ENCODE measurements at regions of chr9 and their contacts with region 1.

Region 1: GRCh38 chr9:129333953-129334724 is 156.1 kb upstream of the IER5L start:
- DNase-seq: peak; percentile 87 to 94
- H3K4me3 ChIP-seq: peak overlapping the region in 3 of 4 experiments; percentile 23 to 49 (median 40); a peak in 6 of 8 replicates
- H3K27ac ChIP-seq: peak overlapping the region; percentile 92
- H3K4me1 ChIP-seq: peaks cover 8 to 40% (median 34%) of the 10 kb centered on the region in 4 experiments
- H3K27me3 ChIP-seq: 0 out of 7 replicates have a peak, but pooled peaks cover 0 to 2% (median 0%) of the 10 kb centered on the region in 4 experiments
- CTCF ChIP-seq: peak in 1 of 3 experiments; percentile 7; a peak in 1 of 4 replicates
- EP300 ChIP-seq: peak in 1 of 2 experiments; percentile 92; a peak in 1 of 3 replicates
- POLR2A ChIP-seq: peak in 1 of 2 experiments; percentile 43; a peak in 1 of 3 replicates
- RAD21 ChIP-seq: peak in 1 of 2 experiments; percentile 35; a peak in 2 of 4 replicates

Region 2: DNA sequence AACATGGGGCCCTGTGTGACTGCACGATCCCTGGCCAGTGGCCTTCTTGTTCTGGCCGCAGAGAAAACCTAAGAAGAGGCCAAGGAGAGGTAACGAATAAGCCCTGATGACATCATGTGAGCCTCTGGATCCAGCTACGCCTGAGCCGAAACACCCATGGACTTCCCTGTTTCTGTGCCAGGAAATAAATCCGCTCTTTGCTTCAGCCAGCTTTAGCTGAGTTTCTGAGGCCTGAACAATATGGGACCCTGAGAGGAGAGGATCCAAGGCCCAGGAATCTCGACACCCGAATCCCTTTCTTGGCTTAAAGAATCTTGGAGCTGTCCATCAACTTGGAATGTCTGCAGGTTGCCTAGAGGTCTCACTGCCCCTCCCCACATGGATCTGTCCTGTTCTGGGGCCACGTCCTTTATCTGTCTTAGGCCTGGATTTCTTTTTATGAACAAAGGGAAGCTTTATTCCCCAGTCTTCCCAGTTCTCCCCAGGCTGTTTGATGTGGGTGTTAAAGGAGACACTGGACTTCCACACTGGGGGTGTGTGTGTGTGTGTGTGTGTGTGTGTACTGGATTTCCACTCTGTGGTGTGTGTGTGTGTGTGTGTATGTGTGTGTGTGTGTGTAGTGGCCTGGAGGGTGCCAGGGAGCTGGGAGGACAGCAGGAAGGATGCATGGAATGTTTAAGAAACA is 169.8 kb before region 1 on chr9:
- CTCF ChIA-PET with region 1: no interaction called
- POLR2A ChIA-PET with region 1: no interaction called
- DNase-seq: no peak
- H3K4me3 ChIP-seq: no peak overlapping the region
- H3K27ac ChIP-seq: no peak overlapping the region
- H3K4me1 ChIP-seq: peaks cover 8 to 20% (median 15%) of the 10 kb centered on the region in 4 experiments
- H3K27me3 ChIP-seq: no peaks in the 10 kb centered on the region
- CTCF ChIP-seq: no peak
- EP300 ChIP-seq: no peak
- POLR2A ChIP-seq: no peak
- RAD21 ChIP-seq: no peak

Region 3: DNA sequence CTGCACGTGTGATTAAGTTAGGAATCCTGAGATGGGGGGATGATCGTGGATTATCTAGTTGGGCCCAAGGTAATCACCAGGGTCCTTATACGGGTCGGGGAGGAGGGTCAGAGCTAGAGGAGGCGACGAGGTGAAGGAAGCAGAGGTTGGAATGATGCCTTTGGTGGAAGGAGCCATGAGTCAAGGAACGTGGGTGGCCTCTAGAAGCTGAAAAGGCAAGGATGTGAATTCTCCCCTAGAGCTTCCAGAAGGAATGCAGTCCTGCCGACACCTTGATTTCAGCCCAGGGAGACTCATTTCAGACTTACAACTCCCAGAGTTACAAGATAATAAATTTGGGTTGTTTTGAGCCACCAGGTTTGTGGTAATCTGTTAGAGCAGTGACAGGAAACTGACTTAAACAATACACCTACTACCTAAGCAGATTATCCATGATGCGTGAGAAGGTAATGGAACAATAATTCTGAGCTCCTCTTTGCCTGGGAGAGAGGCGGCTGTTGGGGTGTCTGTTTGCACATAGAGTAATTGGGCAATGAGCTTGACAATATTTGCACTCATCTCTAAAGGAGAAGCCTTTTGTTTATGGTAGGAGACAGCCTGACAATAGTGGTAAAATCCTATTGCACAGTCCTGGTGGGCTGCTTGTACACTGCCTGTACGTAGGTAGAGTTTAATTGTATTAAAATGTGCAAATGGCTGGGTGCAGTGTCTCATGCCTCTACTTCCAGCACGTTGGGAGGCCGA is 26.7 kb before region 1 on chr9:
- CTCF ChIA-PET with region 1: interaction called, 10 read pairs
- POLR2A ChIA-PET with region 1: no interaction called
- DNase-seq: no peak
- H3K4me3 ChIP-seq: no peak overlapping the region
- H3K27ac ChIP-seq: no peak overlapping the region
- H3K4me1 ChIP-seq: peaks cover 0 to 3% (median 0%) of the 10 kb centered on the region in 4 experiments; a peak in 2 of 7 replicates
- H3K27me3 ChIP-seq: no peaks in the 10 kb centered on the region; a peak in 1 of 7 replicates
- CTCF ChIP-seq: no peak
- EP300 ChIP-seq: no peak
- POLR2A ChIP-seq: no peak
- RAD21 ChIP-seq: no peak

Region 4: GRCh38 chr9:129320575-129321263 is 13.4 kb before region 1 on chr9:
- CTCF ChIA-PET with region 1: interaction called, 8 read pairs
- POLR2A ChIA-PET with region 1: interaction called, 23 read pairs
- DNase-seq: peak in 1 of 2 experiments; percentile 77
- H3K4me3 ChIP-seq: peak overlapping the region; percentile 8 to 54 (median 23); a peak in 5 of 8 replicates
- H3K27ac ChIP-seq: no peak overlapping the region
- H3K4me1 ChIP-seq: peaks cover 0 to 19% (median 12%) of the 10 kb centered on the region in 4 experiments; a peak in 6 of 7 replicates
- H3K27me3 ChIP-seq: peaks cover 0 to 7% (median 5%) of the 10 kb centered on the region in 4 experiments; a peak in 4 of 7 replicates
- CTCF ChIP-seq: no peak
- EP300 ChIP-seq: no peak
- POLR2A ChIP-seq: no peak
- RAD21 ChIP-seq: peak in 1 of 2 experiments; percentile 23; a peak in 2 of 4 replicates

Region 5: DNA sequence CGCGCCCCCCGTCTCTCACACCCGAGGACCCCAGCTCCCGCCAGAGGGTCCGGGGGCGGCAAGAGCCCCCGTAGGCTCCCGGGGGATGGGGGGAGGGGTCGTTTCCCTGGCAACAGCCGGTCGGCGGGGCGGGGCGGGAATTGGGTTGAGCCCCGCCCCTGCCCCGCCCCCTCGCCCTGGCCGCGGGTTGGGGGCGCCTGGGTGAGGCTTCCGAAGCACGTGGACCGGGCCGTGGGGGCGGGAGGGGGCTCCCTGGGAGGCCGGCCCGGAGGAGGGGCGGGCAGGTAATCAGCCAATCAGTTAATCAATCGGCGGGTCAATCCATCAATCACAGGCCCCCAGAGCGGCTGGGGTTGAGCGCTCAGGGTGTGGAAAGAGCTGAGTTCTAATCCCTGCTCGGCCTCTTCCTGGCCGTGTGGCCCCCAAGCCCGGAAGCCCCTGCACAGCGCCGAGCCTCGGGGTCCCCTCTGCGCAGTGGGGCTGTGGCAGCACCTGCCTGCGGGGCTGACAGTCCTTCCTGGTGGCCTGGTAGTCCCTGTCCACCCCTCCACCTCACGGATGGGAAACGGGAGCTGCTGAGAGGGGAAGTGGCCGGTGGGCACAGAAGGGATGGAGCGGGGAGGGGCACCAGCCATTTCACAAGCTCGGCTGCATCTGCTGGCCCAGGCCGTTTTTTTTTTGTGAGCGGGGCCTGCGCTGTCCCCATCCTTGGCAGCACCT is 18.2 kb after region 1 on chr9:
- CTCF ChIA-PET with region 1: interaction called, 4 read pairs
- POLR2A ChIA-PET with region 1: interaction called, 65 read pairs
- DNase-seq: peak; percentile 61 to 93
- H3K4me3 ChIP-seq: peak overlapping the region; percentile 47 to 82 (median 56)
- H3K27ac ChIP-seq: peak overlapping the region; percentile 21; the same call in 1 of the 2 replicates
- H3K4me1 ChIP-seq: peaks cover 0 to 19% (median 8%) of the 10 kb centered on the region in 4 experiments; a peak in 4 of 7 replicates
- H3K27me3 ChIP-seq: no peaks in the 10 kb centered on the region; a peak in 1 of 7 replicates
- CTCF ChIP-seq: no peak
- EP300 ChIP-seq: peak in 1 of 2 experiments; percentile 3; a peak in 1 of 3 replicates
- POLR2A ChIP-seq: no peak
- RAD21 ChIP-seq: no peak